Natural killer cell (primary cell): ENCODE measurements at regions of chr3 and their contacts with region 1.

Region 1: DNA sequence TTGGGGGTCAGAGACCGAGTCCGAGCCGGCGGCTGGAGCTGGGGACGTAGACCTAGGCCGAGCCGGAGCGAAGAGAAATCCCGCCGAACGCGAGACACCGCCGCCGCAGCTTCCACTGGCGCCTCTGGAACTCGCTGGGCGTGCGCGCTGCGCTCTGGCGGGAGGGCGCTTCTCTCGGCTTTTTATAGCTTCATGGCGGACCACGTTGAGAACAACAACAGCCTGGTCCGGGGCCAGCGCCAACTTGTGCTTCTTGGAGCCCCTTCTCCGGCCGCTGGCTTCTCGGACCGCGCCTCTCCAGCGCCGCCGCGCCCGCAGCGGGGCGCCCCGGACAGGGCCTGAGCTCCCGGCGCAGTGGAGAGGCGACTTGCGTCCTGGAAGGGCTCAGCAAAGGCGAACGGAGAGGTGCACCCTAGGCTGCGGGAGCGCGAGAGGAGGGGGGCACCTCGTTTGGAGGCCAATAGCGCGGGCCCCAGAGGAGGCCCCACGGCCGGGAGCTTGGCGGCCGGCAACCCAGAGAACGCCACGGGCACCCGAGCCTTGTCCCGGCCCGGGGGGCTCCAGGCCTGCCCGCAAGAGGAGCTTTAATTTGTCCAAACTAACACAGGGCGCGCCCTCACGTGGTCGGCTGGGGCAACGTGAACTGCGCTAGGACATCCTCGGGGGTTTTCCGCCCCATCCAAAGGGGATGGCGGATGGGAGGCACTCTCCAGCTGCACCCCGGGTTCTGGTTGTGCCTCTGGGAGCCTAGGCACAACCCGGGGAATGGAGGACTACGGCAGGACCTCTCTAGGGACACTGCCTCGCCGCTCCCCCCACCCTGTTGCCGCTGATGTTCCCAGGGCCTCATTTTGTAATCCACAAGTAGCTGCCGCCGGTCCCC is 37.7 kb downstream of the HMCES start:
- DNase-seq: peak; percentile 81 to 92
- ATAC-seq: peak; percentile 27 to 58 (median 53)
- H3K4me3 ChIP-seq: peak overlapping the region; percentile 46
- H3K4me3 Mint-ChIP-seq: peak overlapping the region; percentile 73
- H3K27ac ChIP-seq: peak overlapping the region; percentile 41
- H3K27ac Mint-ChIP-seq: peak overlapping the region; percentile 16 to 86
- H3K4me1 ChIP-seq: peaks cover 36% of the 10 kb centered on the region
- H3K4me1 Mint-ChIP-seq: peaks cover 24 to 50% of the 10 kb centered on the region in 2 donors
- H3K27me3 ChIP-seq: no peaks in the 10 kb centered on the region
- H3K27me3 Mint-ChIP-seq: no peaks in the 10 kb centered on the region
- CTCF ChIP-seq: peak; percentile 44

Region 2: GRCh38 chr3:129278439-129278970 is 37.9 kb before region 1 on chr3 and contains the start of gene HMCES:
- intact Hi-C with region 1: loop called (anchors 2 kb)
- DNase-seq: peak; percentile 91 to 98
- ATAC-seq: peak; percentile 95 to 99 (median 95)
- H3K4me3 ChIP-seq: peak within 1 kb of the TSS; percentile 97
- H3K4me3 Mint-ChIP-seq: peak within 1 kb of the TSS; percentile 93
- H3K27ac ChIP-seq: peak within 1 kb of the TSS; percentile 95
- H3K27ac Mint-ChIP-seq: peak within 1 kb of the TSS; percentile 92 to 95
- H3K4me1 ChIP-seq: peaks cover 37% of the 10 kb centered on the region
- H3K4me1 Mint-ChIP-seq: peaks cover 27 to 30% of the 10 kb centered on the region in 2 donors
- H3K27me3 ChIP-seq: no peaks in the 10 kb centered on the region
- H3K27me3 Mint-ChIP-seq: no peaks in the 10 kb centered on the region
- CTCF ChIP-seq: no peak
- total RNA-seq, gene HMCES: 37.3 to 42.8 (median 40.9) TPM